Activated CD4-positive, alpha-beta T cell treated with anti-CD3 and anti-CD28 coated beads, Interleukin-2, amount 10 ng/mL, durations not matched to agents 7 days and 5 days (primary cell): ENCODE measurements at regions of chr10 and their contacts with region 1.

Region 1: DNA sequence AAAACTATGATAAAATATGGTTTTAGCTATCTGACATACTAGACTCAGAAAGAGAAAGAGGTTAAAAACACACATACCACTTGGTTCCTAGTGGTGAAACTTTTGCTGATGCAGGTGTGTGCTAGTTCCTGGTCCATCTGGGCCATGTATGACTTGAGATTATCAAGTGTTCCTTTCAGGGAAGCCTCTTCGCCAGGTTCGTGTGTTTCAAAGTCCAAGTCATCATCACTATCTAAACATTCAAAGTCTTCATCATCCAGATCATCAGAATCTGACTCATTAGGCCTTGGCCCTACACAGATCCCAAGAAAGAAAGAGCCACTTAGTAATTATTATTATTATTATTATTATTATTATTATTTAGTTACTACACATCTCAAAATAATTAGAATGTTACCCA is 26.4 kb downstream of the NUDT13 start:
- DNase-seq: no peak
- H3K4me3 Mint-ChIP-seq: no peak overlapping the region
- H3K27ac Mint-ChIP-seq: no peak overlapping the region
- H3K4me1 Mint-ChIP-seq: peaks cover 2% of the 10 kb centered on the region
- H3K27me3 Mint-ChIP-seq: no peaks in the 10 kb centered on the region

Region 2: DNA sequence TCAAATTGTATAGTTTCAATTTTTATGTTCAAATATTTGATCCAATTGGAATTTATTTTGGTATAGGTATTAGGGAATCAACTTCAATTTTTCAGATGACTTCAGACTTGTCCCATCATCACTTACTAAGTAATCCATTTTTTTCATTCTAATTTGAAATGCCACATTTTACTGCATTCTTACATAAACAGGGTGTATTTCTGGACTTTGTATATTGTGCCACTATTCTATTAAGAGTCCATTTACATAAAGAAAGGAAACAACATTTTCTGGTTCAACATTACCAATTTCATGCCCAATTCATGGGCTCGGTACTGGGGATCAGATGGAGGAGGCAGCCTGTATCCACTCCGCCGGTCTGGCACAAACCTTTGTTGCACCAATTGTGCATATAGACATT is 15.4 kb after region 1 on chr10:
- CTCF ChIA-PET with region 1: interaction called, 13 read pairs
- POLR2A ChIA-PET with region 1: no interaction called
- DNase-seq: no peak
- H3K4me3 Mint-ChIP-seq: no peak overlapping the region
- H3K27ac Mint-ChIP-seq: no peak overlapping the region
- H3K4me1 Mint-ChIP-seq: peaks cover 2% of the 10 kb centered on the region
- H3K27me3 Mint-ChIP-seq: no peaks in the 10 kb centered on the region